ENCODE measurements at regions of chr3 and their contacts with region 1.

Region 1: DNA sequence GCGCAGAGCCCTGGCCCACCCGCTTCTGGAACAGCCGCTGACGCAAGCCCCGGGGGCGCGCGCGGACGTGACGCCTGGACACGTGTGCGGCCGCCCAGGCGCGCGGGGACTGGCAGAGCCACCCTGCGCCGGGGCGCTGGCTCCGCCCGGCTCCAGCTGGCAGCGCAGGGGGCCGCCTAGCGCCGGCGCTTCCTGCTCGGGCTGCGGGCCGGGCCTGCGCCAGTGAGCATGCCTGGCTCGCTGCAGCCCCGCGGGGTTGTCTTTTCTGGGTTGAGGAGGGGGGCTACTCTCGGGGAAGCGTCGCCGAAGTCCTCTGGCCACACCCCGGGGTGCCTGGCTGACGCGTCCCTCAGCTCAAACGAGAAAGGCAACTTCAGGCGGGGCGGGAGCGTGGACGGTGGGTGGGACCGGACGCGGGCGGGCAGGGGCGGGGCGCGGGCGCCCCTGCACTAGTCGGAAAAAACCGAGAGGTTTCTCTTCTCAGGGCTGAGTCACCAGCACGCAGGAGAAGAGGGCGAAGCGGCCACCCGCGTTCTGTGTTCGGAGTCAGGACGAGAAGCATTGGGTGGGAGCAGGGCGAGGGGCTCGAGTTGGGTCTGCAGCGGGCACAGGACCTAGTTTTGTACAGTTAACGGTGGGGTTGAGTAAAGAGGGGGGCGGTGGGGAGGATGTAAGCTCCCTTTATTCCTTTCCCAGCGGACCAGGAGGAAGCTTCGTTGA is at the start of gene SIAH2:
- DNase-seq: peak; percentile 92 to 93
- ATAC-seq: peak; percentile 90 to 97 (median 94)
- H3K4me3 ChIP-seq: peak within 1 kb of the TSS; percentile 64 to 100 (median 81)
- H3K27ac ChIP-seq: peak within 1 kb of the TSS; percentile 94 to 99 (median 97)
- H3K4me1 ChIP-seq: peaks cover 4 to 47% (median 33%) of the 10 kb centered on the region in 9 donors
- H3K27me3 ChIP-seq: no peaks in the 10 kb centered on the region
- CTCF ChIP-seq: no peak
- total RNA-seq, gene SIAH2: 11.5 to 30.7 (median 20.8) TPM

Region 2: GRCh38 chr3:150546226-150547044 is 216.8 kb before region 1 on chr3 and contains the starts of genes EIF2A and SERP1:
- intact Hi-C with region 1: loop called in 2 of 10 experiments (anchors 5 kb)
- DNase-seq: peak; percentile 98 to 99
- ATAC-seq: peak; percentile 97 to 99 (median 98)
- H3K4me3 ChIP-seq: peak within 1 kb of the TSS; percentile 80 to 92 (median 88)
- H3K27ac ChIP-seq: peak within 1 kb of the TSS; percentile 92 to 99 (median 99)
- H3K4me1 ChIP-seq: peaks cover 3 to 52% (median 33%) of the 10 kb centered on the region in 9 donors
- H3K27me3 ChIP-seq: no peaks in the 10 kb centered on the region
- CTCF ChIP-seq: no peak
- total RNA-seq, gene EIF2A: 67.5 to 86.5 (median 76.2) TPM
- total RNA-seq, gene SERP1: 17.5 to 33.7 (median 21.9) TPM

Region 3: GRCh38 chr3:150603153-150603979 is 159.9 kb before region 1 on chr3 and contains the start of gene SELENOT:
- intact Hi-C with region 1: loop called in 4 of 10 experiments (anchors 2 to 10 kb)
- DNase-seq: peak; percentile 94 to 96
- ATAC-seq: peak; percentile 95 to 99 (median 98)
- H3K4me3 ChIP-seq: peak within 1 kb of the TSS; percentile 45 to 91 (median 80)
- H3K27ac ChIP-seq: peak within 1 kb of the TSS; percentile 92 to 99 (median 96)
- H3K4me1 ChIP-seq: peaks cover 0 to 69% (median 43%) of the 10 kb centered on the region in 9 donors
- H3K27me3 ChIP-seq: no peaks in the 10 kb centered on the region
- CTCF ChIP-seq: peak in 5 of 9 donors; percentile 30 to 51 (median 45)
- total RNA-seq, gene SELENOT: 63.8 to 88.2 (median 76.1) TPM

Region 4: GRCh38 chr3:150710097-150710496 is 53.2 kb before region 1 on chr3:
- intact Hi-C with region 1: loop called in 1 of 10 experiments (anchors 5 kb)
- DNase-seq: no peak
- ATAC-seq: no peak
- H3K4me3 ChIP-seq: no peak overlapping the region
- H3K27ac ChIP-seq: no peak overlapping the region
- H3K4me1 ChIP-seq: peaks cover 0 to 2% (median 0%) of the 10 kb centered on the region in 9 donors
- H3K27me3 ChIP-seq: no peaks in the 10 kb centered on the region
- CTCF ChIP-seq: no peak

Region 5: DNA sequence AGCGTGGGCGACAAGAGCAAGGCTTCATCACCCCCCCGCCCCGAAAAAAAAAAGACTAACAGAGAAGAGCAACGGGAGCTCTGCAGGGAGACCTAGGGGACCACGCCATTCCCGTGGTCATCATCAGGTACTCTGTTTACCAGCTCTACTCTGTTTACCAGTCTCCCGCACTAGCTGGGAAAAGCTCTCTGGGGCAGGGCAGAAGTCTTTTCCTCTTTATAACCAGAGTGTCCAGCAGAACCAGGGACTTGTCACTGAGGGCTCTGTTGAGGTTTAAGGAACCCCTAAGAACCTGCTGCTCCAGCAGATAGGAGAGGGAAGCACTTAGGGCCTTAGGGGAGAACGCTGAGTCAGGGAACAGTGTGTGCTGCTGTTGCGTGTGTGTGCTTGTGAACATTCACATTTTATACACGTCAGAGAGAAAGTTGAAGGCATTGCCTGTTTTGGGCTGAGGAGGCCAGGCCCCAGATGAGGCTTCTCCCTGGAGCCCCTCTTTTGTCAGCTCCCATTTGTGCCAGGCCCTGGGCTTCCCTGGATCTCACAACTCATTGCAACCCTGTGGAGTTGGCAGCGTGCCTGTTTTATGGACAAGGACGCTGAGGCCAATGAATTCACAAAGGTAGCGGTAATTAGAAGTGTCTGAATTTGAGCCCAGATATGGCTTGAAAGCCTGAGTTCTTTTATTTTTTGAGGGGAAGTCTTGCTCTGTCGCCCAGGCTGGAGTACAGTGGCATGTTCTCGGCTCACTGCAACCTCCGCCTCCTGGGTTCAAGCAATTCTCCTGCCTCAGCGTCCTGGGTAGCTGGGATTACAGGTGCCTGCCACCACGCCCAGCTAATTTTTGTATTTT is 35.4 kb before region 1 on chr3:
- intact Hi-C with region 1: loop called in 4 of 10 experiments (anchors 5 kb)
- DNase-seq: no peak
- ATAC-seq: peak; percentile 38 to 90 (median 61)
- H3K4me3 ChIP-seq: no peak overlapping the region
- H3K27ac ChIP-seq: peak overlapping the region in 3 of 10 donors; percentile 56 to 77 (median 60)
- H3K4me1 ChIP-seq: peaks cover 0 to 21% (median 7%) of the 10 kb centered on the region in 9 donors
- H3K27me3 ChIP-seq: no peaks in the 10 kb centered on the region
- CTCF ChIP-seq: no peak